Vagina (tissue), 2 donors: ENCODE measurements at regions of chr19 and their contacts with region 1.

Region 1: GRCh38 chr19:19540715-19541440 is 2.8 kb downstream of the CILP2 start:
- DNase-seq: no peak
- H3K4me3 ChIP-seq: peak overlapping the region; percentile 16 to 21
- H3K27ac ChIP-seq: no peak overlapping the region
- H3K4me1 ChIP-seq: peaks cover 37% of the 10 kb centered on the region
- H3K27me3 ChIP-seq: no peaks in the 10 kb centered on the region
- CTCF ChIP-seq: no peak
- POLR2A ChIP-seq: no peak

Region 2: GRCh38 chr19:19224852-19225494 is 315.9 kb before region 1 on chr19:
- intact Hi-C with region 1: no loop called
- DNase-seq: no peak
- H3K4me3 ChIP-seq: peak overlapping the region; percentile 27 to 44
- H3K27ac ChIP-seq: no peak overlapping the region
- H3K4me1 ChIP-seq: peaks cover 11% of the 10 kb centered on the region
- H3K27me3 ChIP-seq: no peaks in the 10 kb centered on the region
- CTCF ChIP-seq: peak in 2 of 3 experiments; percentile 20 to 33
- POLR2A ChIP-seq: no peak

Region 3: GRCh38 chr19:19618219-19619051 is 77.6 kb after region 1 on chr19 and contains the start of gene PBX4:
- intact Hi-C with region 1: loop called (anchors 2 kb)
- DNase-seq: no peak
- H3K4me3 ChIP-seq: peak within 1 kb of the TSS; percentile 40 to 45
- H3K27ac ChIP-seq: no peak within 1 kb of the TSS
- H3K4me1 ChIP-seq: peaks cover 7% of the 10 kb centered on the region
- H3K27me3 ChIP-seq: no peaks in the 10 kb centered on the region
- CTCF ChIP-seq: no peak
- POLR2A ChIP-seq: no peak
- total RNA-seq, gene PBX4: 5.2 TPM

Region 4: DNA sequence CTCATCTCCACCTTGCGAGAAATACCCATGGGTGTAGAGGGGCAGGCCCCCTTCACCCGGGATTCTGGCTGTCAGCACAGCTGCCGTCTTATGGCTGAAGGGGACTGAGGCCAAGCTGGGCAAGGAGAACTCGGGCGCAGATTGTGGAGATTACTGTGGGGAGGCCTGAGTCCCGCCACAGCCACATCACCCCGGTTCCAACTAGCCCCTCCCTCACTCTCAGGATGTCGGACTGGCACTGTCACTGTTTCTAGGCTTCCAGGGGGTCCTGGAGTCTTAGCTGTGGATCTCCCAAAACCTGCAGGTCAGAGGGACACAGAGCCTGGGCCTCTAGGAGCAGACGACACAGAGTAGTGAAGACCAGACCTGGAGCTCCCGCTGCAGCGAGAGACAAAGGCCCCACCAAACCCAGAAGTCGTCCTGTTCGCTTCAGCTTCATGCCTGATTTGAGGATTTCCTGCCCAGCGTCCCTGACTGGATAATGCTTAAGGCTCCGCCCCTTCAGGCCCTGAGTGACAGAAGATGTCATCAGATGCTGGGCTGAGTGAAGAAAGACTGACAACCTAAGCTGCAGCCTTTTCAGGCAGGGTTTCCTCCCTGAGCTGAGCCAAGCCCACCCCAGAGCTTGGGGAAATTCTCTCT is 415.7 kb after region 1 on chr19:
- intact Hi-C with region 1: loop called (anchors 10 kb)
- DNase-seq: peak in 1 of 2 donors; percentile 49
- H3K4me3 ChIP-seq: no peak overlapping the region
- H3K27ac ChIP-seq: no peak overlapping the region
- H3K4me1 ChIP-seq: no peaks in the 10 kb centered on the region
- H3K27me3 ChIP-seq: no peaks in the 10 kb centered on the region
- CTCF ChIP-seq: no peak
- POLR2A ChIP-seq: no peak